Mucosa of descending colon (tissue), 3 donors: ENCODE measurements at regions of chr3 and their contacts with region 1.

Region 1: GRCh38 chr3:139111392-139112229 is 66.9 kb upstream of the PRR23C start:
- DNase-seq: peak; percentile 60 to 87 (median 82)
- ATAC-seq: peak; percentile 87
- H3K4me3 ChIP-seq: no peak overlapping the region
- H3K4me1 ChIP-seq: peaks cover 5% of the 10 kb centered on the region
- CTCF ChIP-seq: peak; percentile 62

Region 2: GRCh38 chr3:138712086-138712485 is 399.5 kb before region 1 on chr3:
- intact Hi-C with region 1: no loop called
- DNase-seq: no peak
- ATAC-seq: no peak
- H3K4me3 ChIP-seq: no peak overlapping the region
- H3K4me1 ChIP-seq: no peaks in the 10 kb centered on the region
- CTCF ChIP-seq: no peak

Region 3: GRCh38 chr3:139044366-139045210 is 67.0 kb before region 1 on chr3 and contains the start of gene PRR23C:
- intact Hi-C with region 1: no loop called
- DNase-seq: no peak
- ATAC-seq: no peak
- H3K4me3 ChIP-seq: no peak within 1 kb of the TSS
- H3K4me1 ChIP-seq: no peaks in the 10 kb centered on the region
- CTCF ChIP-seq: no peak
- total RNA-seq, gene PRR23C: not detected

Region 4: DNA sequence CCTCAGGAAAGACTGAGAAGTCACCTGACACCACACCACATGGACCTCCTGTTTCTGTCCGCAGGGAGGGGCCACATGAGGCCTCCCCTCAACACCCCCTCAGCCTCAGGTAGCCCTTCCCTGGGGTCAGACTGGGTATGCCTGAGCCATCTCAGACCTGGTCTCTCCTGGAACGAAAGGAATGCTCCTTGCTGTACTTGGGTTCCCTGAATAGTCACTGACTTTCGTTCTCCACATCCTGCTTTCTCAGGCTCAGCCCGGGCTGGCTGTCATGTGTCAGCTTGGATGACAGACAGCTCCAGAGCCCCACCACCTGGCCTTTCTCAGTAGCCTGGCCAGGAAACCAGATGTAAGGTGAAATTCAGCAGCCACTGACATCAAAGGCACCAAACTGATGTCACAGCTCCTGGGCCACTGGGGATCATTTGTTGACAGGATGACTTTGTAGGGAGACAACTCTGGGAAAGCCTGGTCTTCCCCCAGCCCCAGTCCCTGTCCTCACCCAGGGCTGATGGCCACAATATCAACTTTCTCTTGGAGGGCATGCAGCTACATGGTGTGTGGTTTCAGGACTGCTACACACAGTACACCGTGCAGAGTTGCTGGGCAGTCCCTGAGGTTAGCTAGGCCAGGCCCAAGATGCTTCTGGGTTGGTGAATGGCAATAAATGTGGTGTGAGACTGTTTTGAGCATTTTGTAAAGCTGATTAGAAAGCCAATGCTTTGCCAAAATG is 90.8 kb after region 1 on chr3:
- intact Hi-C with region 1: loop called in 1 of 2 experiments (anchors 2 kb)
- DNase-seq: peak; percentile 67 to 82 (median 81)
- ATAC-seq: peak; percentile 97
- H3K4me3 ChIP-seq: no peak overlapping the region
- H3K4me1 ChIP-seq: peaks cover 11% of the 10 kb centered on the region
- CTCF ChIP-seq: peak; percentile 36